Thyroid gland (tissue), 4 donors: ENCODE measurements at regions of chr7 and their contacts with region 1.

Region 1: DNA sequence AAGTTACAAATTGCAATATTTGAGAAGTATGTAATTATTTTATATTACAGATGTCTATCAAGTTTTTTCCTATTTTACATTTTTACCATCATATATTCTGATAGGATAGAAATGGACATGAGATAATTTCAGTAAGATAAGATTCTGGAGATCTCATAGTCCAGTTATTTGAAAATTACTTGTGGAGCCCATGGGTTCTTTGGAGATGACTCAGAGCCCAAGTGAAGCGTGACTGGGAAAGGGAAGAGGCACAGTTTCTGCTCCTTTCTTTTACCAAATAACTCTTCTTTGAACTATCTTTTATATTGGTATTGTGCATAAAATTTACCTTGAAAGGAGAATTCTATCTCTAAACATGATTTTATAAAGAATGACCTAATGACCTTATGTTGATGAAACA is 2.4 kb downstream of the CD36 start:
- DNase-seq: peak in 1 of 2 donors; percentile 14
- H3K4me3 ChIP-seq: no peak overlapping the region
- H3K27ac ChIP-seq: no peak overlapping the region
- H3K4me1 ChIP-seq: no peaks in the 10 kb centered on the region
- H3K27me3 ChIP-seq: no peaks in the 10 kb centered on the region
- CTCF ChIP-seq: no peak
- POLR2A ChIP-seq: no peak

Region 2: DNA sequence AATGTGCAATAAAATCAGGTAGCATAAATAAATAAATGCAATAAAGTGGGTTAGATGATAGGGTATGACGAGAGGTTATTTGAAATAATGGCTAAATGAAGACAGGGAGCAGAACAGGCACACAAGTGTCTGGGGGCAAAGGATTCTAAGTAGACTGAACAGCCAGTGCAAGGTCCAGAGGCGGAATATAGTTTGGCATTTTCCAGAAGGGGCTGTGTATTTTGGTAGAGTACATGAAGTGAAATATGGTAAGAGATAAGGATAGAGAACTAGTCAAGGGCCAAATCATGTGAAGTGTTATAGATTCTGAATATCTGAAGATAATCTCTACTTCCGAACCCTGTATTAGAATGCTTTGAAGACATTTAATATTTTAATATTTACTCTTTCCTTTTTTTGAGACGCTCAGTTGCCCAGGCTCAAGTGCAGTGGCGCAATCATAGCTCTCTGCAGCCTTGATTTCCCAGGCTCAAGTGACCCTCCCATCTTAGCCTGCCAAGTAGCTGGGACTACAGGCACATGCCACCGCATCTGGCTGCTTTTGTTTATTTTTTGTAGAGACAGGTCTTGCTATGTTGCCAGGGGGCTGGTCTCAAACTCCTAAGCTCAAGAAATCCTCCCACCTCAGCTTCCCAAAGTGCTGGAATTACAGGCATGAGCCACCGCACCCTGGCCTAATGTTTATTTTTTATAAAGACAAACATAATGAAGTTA is 46.8 kb before region 1 on chr7:
- intact Hi-C with region 1: loop called (anchors 10 kb)
- DNase-seq: peak; percentile 72 to 81
- H3K4me3 ChIP-seq: no peak overlapping the region
- H3K27ac ChIP-seq: peak overlapping the region in 2 of 3 donors; percentile 7 to 39
- H3K4me1 ChIP-seq: peaks cover 0 to 13% of the 10 kb centered on the region in 2 donors
- H3K27me3 ChIP-seq: no peaks in the 10 kb centered on the region
- CTCF ChIP-seq: no peak
- POLR2A ChIP-seq: no peak

Region 3: GRCh38 chr7:80748363-80749042 is 107.7 kb after region 1 on chr7:
- intact Hi-C with region 1: no loop called
- DNase-seq: no peak
- H3K4me3 ChIP-seq: no peak overlapping the region
- H3K27ac ChIP-seq: no peak overlapping the region
- H3K4me1 ChIP-seq: no peaks in the 10 kb centered on the region
- H3K27me3 ChIP-seq: no peaks in the 10 kb centered on the region
- CTCF ChIP-seq: no peak
- POLR2A ChIP-seq: no peak

Region 4: DNA sequence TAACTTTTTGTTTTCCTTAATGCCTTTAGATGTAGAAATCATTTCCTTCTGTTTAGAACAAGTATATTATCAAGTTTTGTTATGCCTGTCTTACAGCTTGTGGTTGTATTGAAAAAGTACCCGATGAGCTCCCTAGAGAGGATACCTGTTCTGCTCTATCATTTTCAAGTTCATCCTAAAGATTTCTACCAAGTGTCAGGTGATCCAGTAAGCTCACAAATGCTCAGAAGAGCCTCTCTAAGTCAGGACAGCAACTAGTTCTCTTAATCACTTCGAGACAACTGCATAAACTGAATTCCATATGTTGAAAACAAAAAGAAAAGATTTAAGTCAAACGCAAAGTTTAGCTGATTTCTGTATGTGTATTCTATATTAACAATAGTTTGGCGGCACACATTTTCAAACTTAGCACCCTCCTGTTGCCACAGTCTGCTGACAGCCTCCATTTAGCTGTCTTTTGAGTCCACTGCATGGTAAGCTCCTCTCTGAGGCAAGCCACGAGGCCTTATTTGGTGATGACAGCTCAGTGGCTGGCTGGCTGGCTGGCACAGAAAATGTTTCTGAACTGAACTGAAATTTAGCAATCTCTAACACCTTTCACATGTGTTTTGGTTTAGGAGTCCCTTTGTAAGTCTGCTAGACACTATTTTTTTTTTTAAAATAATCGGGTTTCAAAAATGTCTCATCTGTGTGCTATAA is 218.6 kb after region 1 on chr7:
- intact Hi-C with region 1: no loop called
- DNase-seq: no peak
- H3K4me3 ChIP-seq: no peak overlapping the region
- H3K27ac ChIP-seq: no peak overlapping the region
- H3K4me1 ChIP-seq: no peaks in the 10 kb centered on the region
- H3K27me3 ChIP-seq: no peaks in the 10 kb centered on the region
- CTCF ChIP-seq: no peak
- POLR2A ChIP-seq: no peak

Region 5: GRCh38 chr7:80960244-80960795 is 319.5 kb after region 1 on chr7:
- intact Hi-C with region 1: no loop called
- DNase-seq: no peak
- H3K4me3 ChIP-seq: no peak overlapping the region
- H3K27ac ChIP-seq: no peak overlapping the region
- H3K4me1 ChIP-seq: no peaks in the 10 kb centered on the region
- H3K27me3 ChIP-seq: no peaks in the 10 kb centered on the region
- CTCF ChIP-seq: no peak
- POLR2A ChIP-seq: no peak